ENCODE measurements at regions of chr17 and their contacts with region 1.

Region 1: DNA sequence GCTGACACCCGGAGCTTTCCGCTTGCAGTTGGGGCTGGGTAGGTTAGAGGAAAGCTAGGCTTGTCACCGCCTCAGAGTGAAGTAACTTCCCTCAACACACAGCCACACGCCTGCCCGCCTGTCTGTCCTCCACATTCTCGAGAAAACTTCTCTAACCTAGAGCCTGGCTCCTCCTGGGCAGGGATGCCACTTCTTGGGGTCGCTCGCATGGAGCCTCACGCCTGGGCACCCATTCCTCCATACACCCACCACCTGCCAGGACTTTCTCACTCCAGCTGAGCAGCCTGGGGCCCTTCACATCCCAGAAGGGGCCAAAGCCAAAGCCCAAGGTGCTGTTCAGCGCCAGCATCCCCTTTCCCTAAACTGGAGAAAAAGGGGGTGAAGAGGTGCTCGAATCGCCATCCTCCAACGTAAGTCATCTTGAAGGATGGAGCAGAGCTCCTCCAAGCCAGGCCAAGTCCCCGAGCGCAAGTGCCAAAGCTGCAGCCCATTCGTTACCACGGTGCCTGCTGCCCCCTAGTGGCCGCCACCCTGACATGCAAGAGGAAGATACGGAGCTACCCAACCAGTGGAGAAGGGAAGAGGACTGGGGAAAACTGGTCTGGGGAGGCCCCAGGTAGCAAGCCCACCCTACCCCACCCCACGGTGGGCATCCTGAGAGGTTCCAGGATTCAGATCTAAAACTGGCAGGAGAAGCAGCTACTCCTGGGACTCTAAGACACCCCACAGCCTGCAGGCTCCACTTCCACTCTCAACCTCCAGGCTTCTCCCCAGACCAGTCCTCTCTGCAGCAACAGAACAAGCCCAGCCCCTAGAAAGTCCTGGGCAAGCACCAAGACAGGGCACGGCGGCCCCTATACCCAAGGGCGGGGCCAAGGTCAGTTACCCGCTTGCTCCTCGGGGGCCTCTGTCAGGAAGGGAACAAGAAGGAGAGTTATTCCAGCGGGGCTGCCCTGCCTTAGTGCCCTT is 63.1 kb downstream of the MYO18A start:
- DNase-seq: peak; percentile 58 to 86 (median 80)
- ATAC-seq: peak; percentile 90
- H3K4me3 ChIP-seq: no peak overlapping the region
- H3K4me3 Mint-ChIP-seq: no peak overlapping the region
- H3K27ac ChIP-seq: no peak overlapping the region
- H3K27ac Mint-ChIP-seq: no peak overlapping the region
- H3K4me1 ChIP-seq: peaks cover 3% of the 10 kb centered on the region
- H3K4me1 Mint-ChIP-seq: peaks cover 2% of the 10 kb centered on the region
- H3K27me3 ChIP-seq: no peaks in the 10 kb centered on the region
- H3K27me3 Mint-ChIP-seq: no peaks in the 10 kb centered on the region
- CTCF ChIP-seq: peak; percentile 94

Region 2: DNA sequence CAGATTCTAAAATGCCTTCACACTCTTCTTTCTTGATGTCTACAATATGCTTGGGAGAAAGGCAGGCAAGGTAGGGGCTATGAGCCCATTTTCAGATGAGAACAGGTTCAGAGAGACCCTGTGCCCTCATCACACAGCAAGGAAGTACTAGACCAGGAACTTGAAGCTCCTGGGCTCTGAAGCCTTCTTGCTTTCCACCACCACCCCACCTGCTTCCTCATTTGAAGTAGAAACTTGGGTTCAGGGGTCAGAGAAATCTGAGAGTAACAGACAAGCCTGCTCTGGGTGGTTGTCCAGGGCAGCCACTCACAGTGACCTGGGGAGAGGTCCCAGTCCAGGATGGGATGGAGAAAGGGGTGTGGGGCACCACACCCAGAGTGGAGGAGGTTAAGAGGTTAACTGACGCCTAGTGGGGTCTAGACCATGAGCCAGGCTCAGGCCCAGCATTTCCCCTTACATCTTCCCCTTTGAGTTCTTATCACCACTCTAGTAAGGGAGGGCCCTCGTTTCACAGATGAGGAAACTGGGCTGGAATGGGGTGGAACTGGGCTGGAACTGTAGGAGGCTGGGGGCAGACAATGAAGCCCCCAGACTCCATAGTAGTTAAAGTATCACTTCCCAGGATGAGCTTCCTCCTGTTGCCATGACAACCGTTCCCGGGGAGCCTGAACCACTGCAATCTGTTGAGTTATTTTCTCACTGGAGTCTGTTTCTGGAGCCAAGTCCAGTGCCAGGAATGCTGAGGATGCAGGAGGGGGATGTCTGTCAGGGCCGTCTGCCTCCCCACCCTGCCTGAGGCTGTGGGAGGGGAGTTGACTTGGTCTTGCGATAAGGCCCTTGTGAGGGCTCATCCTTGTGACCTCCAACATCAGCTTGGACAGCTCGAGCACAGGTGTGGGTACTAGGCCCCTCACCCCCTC is 149.6 kb before region 1 on chr17:
- CTCF ChIA-PET with region 1: interaction called, 368 read pairs
- POLR2A ChIA-PET with region 1: no interaction called
- intact Hi-C with region 1: loop called (anchors 1 kb)
- DNase-seq: no peak
- ATAC-seq: no peak
- H3K4me3 ChIP-seq: no peak overlapping the region
- H3K4me3 Mint-ChIP-seq: no peak overlapping the region
- H3K27ac ChIP-seq: no peak overlapping the region
- H3K27ac Mint-ChIP-seq: no peak overlapping the region
- H3K4me1 ChIP-seq: no peaks in the 10 kb centered on the region
- H3K4me1 Mint-ChIP-seq: peaks cover 4% of the 10 kb centered on the region
- H3K27me3 ChIP-seq: peaks cover 0 to 5% of the 10 kb centered on the region in 2 experiments
- H3K27me3 Mint-ChIP-seq: peaks cover 9% of the 10 kb centered on the region
- CTCF ChIP-seq: no peak

Region 3: GRCh38 chr17:29102741-29103181 is 14.3 kb before region 1 on chr17:
- CTCF ChIA-PET with region 1: interaction called, 24 read pairs
- POLR2A ChIA-PET with region 1: no interaction called
- intact Hi-C with region 1: no loop called
- DNase-seq: no peak
- ATAC-seq: no peak
- H3K4me3 ChIP-seq: no peak overlapping the region
- H3K4me3 Mint-ChIP-seq: no peak overlapping the region
- H3K27ac ChIP-seq: no peak overlapping the region
- H3K27ac Mint-ChIP-seq: no peak overlapping the region
- H3K4me1 ChIP-seq: no peaks in the 10 kb centered on the region
- H3K4me1 Mint-ChIP-seq: peaks cover 1% of the 10 kb centered on the region
- H3K27me3 ChIP-seq: no peaks in the 10 kb centered on the region
- H3K27me3 Mint-ChIP-seq: no peaks in the 10 kb centered on the region
- CTCF ChIP-seq: no peak

Region 4: GRCh38 chr17:29140051-29140621 is 23.0 kb after region 1 on chr17:
- CTCF ChIA-PET with region 1: interaction called, 80 read pairs
- POLR2A ChIA-PET with region 1: interaction called, 4 read pairs
- intact Hi-C with region 1: no loop called
- DNase-seq: peak; percentile 50 to 91 (median 85)
- ATAC-seq: peak; percentile 72
- H3K4me3 ChIP-seq: peak overlapping the region; percentile 69 to 73
- H3K4me3 Mint-ChIP-seq: peak overlapping the region; percentile 93
- H3K27ac ChIP-seq: peak overlapping the region; percentile 54 to 84
- H3K27ac Mint-ChIP-seq: peak overlapping the region; percentile 100
- H3K4me1 ChIP-seq: peaks cover 50% of the 10 kb centered on the region
- H3K4me1 Mint-ChIP-seq: peaks cover 68% of the 10 kb centered on the region
- H3K27me3 ChIP-seq: no peaks in the 10 kb centered on the region
- H3K27me3 Mint-ChIP-seq: no peaks in the 10 kb centered on the region
- CTCF ChIP-seq: no peak

Region 5: DNA sequence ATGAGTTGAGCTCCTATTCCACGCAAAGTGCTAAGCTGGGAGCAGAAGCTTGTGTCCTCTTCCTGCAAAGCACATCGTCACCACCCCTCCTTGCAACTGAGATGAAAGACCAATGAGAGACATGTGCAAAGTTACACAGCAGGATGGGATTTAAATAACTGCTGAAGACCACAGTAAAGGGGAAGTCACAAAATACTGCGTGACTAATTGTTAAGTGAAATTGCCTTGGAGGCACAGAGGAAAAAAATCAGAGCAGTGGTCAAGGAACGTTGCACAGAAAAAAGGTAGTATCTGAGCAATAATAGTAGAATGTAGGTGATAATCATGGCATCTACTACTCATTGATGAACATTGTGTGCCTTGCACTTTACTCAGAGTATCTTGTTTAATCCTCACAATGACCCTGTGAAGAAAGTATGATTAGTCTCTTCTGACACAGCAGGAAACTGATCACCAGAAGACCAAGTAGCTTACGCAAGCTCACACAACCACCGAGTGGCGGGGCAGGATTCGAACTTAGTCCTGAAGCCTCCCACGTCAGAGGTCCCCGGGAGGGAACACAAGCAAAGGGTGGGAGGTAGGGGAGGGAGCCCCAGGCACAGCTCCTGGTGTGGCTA is 78.5 kb after region 1 on chr17:
- CTCF ChIA-PET with region 1: interaction called, 10 read pairs
- POLR2A ChIA-PET with region 1: no interaction called
- intact Hi-C with region 1: no loop called
- DNase-seq: peak in 1 of 9 experiments; percentile 21
- ATAC-seq: no peak
- H3K4me3 ChIP-seq: no peak overlapping the region
- H3K4me3 Mint-ChIP-seq: no peak overlapping the region
- H3K27ac ChIP-seq: no peak overlapping the region
- H3K27ac Mint-ChIP-seq: no peak overlapping the region
- H3K4me1 ChIP-seq: peaks cover 4% of the 10 kb centered on the region
- H3K4me1 Mint-ChIP-seq: peaks cover 4% of the 10 kb centered on the region
- H3K27me3 ChIP-seq: no peaks in the 10 kb centered on the region
- H3K27me3 Mint-ChIP-seq: peaks cover 12% of the 10 kb centered on the region
- CTCF ChIP-seq: no peak

Region 6: DNA sequence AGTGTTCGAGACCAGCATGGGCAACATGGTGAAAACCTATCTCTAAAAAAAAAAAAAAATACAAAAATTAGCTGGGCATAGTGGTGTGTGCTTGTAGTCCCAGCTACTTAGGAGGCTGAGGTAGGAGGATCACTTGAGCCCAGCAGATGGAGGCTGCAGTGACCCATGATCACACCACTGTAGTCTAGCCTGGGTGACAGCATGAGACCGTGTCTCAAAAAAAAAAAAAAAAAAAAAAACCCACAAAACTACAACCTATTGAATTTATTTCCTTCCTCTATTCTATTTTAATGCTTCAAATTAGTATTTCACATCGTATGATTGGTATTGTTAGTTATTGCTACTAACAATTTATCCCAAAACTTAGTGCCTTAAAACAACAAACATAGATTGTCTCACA is 186.3 kb after region 1 on chr17:
- CTCF ChIA-PET with region 1: no interaction called
- POLR2A ChIA-PET with region 1: no interaction called
- intact Hi-C with region 1: no loop called
- DNase-seq: no peak
- ATAC-seq: no peak
- H3K4me3 ChIP-seq: no peak overlapping the region
- H3K4me3 Mint-ChIP-seq: no peak overlapping the region
- H3K27ac ChIP-seq: no peak overlapping the region
- H3K27ac Mint-ChIP-seq: no peak overlapping the region
- H3K4me1 ChIP-seq: no peaks in the 10 kb centered on the region
- H3K4me1 Mint-ChIP-seq: no peaks in the 10 kb centered on the region
- H3K27me3 ChIP-seq: no peaks in the 10 kb centered on the region
- H3K27me3 Mint-ChIP-seq: peaks cover 3% of the 10 kb centered on the region
- CTCF ChIP-seq: no peak